ENCODE measurements at regions of chr20 and their contacts with region 1.

Region 1: DNA sequence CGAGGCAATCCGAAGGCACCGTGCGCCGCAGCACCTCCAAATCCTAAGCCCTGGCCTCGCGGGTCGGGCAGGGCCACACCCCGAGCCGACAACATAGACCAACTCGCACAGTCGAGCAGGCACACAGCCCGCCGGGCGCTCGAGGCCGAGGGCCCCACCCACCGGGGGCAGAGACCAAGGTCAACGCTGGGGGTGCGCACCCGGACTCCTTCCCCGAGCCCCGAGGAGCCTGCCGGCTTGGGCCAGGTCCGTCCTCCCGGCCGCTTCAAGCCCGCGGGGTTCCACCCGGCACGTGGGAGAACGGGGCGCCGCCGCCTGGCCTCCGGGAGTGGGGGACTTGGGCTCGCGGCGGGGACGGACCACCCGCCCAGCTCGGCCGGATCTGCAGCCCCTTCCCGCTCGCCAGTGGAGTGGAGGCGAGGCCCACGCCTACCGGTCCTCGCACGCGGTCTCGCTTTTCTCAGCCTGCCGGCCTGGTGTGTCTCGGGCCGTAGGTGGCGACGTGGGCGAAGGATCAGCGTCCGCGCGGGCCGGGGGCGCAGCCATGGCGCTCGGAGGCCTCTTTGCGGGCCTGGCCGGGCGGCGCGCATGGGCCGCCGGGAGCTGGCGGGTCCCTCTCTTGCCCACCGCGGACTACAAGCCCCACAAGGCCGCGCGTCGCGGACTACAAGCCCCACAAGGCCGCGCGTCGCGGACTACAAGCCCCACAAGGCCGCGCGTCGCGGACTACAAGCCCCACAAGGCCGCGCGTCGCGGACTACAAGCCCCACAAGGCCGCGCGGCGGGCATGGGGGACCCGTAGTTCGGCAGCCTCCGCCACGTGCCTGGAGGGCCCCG is at the start of gene UCKL1:
- DNase-seq: peak; percentile 95 to 98 (median 97)
- ATAC-seq: peak; percentile 88 to 89
- H3K4me3 ChIP-seq: peak within 1 kb of the TSS; percentile 71
- H3K27ac ChIP-seq: peak within 1 kb of the TSS; percentile 85
- H3K4me1 ChIP-seq: peaks cover 8% of the 10 kb centered on the region
- H3K27me3 ChIP-seq: no peaks in the 10 kb centered on the region
- total RNA-seq, gene UCKL1: 35.5 to 47.0 (median 44.0) TPM

Region 2: DNA sequence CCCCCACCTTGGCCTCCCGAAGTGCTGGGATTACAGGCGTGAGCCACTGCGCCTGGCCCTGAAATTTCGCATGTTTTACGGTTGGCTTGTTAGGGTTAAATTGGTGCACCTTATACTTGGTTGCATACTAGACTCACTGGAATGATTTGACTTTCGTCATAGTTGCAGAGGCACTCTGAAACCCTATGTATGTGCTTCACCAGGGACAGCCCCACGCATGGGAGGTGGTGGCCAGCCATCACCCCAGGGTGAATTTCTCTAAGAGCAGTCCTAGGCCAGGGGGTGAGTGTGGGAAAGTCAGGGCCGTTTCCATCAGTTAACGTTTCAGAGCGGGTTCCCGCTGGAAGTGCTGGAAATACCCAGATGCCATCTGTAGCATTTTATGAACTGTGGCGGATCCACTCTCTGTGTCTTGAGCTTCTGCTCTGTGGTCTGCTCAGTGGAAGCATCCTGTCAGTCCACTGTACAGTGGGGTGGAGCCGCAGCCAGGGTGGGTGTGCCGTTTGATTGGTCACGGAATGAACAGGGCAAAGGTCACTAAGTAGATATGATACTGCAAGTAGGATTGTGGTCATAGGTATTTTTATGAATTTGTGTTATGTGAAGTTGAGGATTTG is 47.9 kb before region 1 on chr20:
- intact Hi-C with region 1: loop called in 1 of 4 experiments (anchors 5 kb)
- DNase-seq: no peak
- ATAC-seq: peak in 1 of 2 donors; percentile 52
- H3K4me3 ChIP-seq: no peak overlapping the region
- H3K27ac ChIP-seq: no peak overlapping the region
- H3K4me1 ChIP-seq: peaks cover 14% of the 10 kb centered on the region
- H3K27me3 ChIP-seq: no peaks in the 10 kb centered on the region

Region 3: DNA sequence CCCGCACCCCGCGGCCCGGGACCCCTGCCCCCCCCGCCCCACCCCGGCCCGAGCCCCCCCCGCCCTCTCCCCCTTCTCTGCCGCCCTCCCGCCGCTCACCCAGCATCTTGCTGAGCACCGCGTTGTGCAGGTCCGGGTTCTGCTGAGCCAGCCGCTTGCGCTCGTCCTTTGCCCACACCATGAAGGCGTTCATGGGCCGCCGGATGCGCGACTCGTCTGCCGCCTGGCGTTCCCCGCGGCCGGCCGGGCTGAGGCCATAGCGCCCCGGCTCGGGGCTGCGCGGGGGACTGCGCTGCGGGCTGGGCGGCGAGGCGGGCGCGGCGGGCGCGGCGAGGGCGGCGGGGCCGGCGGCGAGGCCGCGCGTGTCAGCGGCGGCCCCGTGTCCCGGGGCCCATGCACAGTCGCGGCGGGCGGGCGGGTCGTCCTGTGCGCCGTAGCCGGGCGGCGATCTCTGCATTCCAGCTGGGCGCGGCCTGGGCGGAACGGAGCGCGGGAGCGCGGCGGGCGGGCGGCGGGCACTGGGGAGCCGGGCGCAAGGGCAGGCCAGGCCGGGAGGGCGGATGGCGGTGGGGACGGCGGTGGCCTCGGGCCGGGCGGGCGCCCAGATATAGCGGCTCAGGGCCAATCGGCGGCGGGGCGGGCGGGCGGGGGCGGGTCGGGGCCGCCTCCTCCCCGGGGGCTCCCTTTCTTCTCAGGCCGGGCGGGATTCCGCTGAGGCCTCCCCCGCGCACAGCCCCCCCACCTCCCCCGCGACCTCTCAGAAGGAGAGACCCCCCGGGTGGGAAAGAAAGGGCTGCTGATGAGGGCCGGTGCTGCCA is 93.2 kb after region 1 on chr20 and contains the start of gene SOX18:
- intact Hi-C with region 1: no loop called
- DNase-seq: peak; percentile 65 to 88 (median 84)
- ATAC-seq: peak; percentile 15 to 29
- H3K4me3 ChIP-seq: peak within 1 kb of the TSS; percentile 53
- H3K27ac ChIP-seq: peak within 1 kb of the TSS; percentile 57
- H3K4me1 ChIP-seq: no peaks in the 10 kb centered on the region
- H3K27me3 ChIP-seq: no peaks in the 10 kb centered on the region
- total RNA-seq, gene SOX18: 28.7 to 42.1 (median 41.1) TPM